IMR-90 (cell line): ENCODE measurements at regions of chr7 and their contacts with region 1.

Region 1: DNA sequence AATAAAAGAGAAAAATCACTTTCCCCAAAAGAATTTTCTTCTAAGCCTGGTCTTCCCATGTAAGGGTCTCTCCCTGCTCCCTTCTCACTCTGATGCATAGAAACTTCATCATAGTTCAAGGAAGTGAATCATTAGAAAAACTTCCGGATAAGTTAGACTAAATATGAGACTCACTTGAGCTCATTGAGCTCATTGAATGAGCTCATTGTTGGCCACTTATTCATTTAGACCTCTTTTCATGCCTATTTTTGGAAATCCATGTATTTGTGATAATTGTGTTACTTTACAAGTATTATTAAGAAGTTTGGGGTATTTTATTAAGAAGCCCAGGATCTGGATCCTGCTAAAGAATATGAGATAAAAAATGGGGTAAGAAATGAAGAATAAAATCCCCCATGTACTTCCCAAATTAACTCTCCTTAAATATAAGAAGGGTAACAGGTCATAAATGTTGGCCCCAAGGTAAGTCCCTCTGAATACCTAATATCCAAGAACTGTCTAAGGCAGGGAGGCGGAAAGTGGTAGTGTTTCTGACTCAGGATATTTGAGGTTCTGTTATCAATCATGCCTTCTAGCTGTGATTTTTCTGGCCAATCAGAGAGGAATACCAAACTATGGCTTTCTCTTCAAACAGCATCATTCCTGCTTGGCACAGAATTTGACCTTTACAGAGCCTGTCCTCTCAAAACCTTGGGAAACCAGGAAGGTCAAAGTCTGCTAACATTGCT is 236.5 kb upstream of the PTN start:
- DNase-seq: peak; percentile 95
- ATAC-seq: peak; percentile 90
- H3K4me3 ChIP-seq: no peak overlapping the region
- H3K27ac ChIP-seq: peak overlapping the region; percentile 93
- H3K4me1 ChIP-seq: peaks cover 14% of the 10 kb centered on the region; the same call in 1 of the 2 replicates
- H3K27me3 ChIP-seq: no peaks in the 10 kb centered on the region
- CTCF ChIP-seq: no peak
- POLR2A ChIP-seq: no peak
- RAD21 ChIP-seq: peak; percentile 9; the same call in 1 of the 2 replicates

Region 2: GRCh38 chr7:137328373-137329120 is 251.5 kb before region 1 on chr7:
- CTCF ChIA-PET with region 1: no interaction called
- POLR2A ChIA-PET with region 1: no interaction called
- dilution Hi-C with region 1: no loop called
- in situ Hi-C with region 1: no loop called
- intact Hi-C with region 1: no loop called
- DNase-seq: peak; percentile 53
- ATAC-seq: peak; percentile 66
- H3K4me3 ChIP-seq: no peak overlapping the region
- H3K27ac ChIP-seq: no peak overlapping the region
- H3K4me1 ChIP-seq: peaks cover 10% of the 10 kb centered on the region
- H3K27me3 ChIP-seq: no peaks in the 10 kb centered on the region
- CTCF ChIP-seq: no peak
- POLR2A ChIP-seq: no peak
- RAD21 ChIP-seq: no peak

Region 3: GRCh38 chr7:137538361-137538762 is 41.7 kb before region 1 on chr7:
- CTCF ChIA-PET with region 1: no interaction called
- POLR2A ChIA-PET with region 1: no interaction called
- dilution Hi-C with region 1: no loop called
- in situ Hi-C with region 1: no loop called
- intact Hi-C with region 1: loop called (anchors 5 kb)
- DNase-seq: peak; percentile 90
- ATAC-seq: peak; percentile 73
- H3K4me3 ChIP-seq: no peak overlapping the region; the same call in 1 of the 2 replicates
- H3K27ac ChIP-seq: peak overlapping the region; percentile 92
- H3K4me1 ChIP-seq: peaks cover 12% of the 10 kb centered on the region
- H3K27me3 ChIP-seq: no peaks in the 10 kb centered on the region
- CTCF ChIP-seq: no peak
- POLR2A ChIP-seq: no peak; the same call in 1 of the 2 replicates
- RAD21 ChIP-seq: no peak